ENCODE measurements at regions of chr1 and their contacts with region 1.

Region 1: DNA sequence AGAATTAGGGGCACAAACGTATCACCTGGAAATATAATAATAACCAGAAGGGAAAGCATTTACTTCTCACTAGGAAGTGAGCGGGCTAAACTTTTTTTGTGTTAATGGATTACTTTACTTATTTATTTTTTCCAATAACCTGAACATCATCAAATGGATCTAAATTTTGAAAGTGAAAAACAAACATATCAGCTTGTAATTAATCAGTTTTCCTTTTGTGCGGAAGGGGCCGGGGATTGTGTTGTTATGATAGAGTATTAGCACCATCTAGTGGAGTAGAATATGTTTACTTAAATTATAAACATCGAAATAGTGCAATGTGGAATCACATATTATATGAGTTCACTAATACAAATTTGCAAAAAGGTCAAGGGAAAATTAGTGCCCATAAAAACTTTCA is 9.0 kb downstream of the CFH start:
- DNase-seq: no peak
- ATAC-seq: peak; percentile 36

Region 2: GRCh38 chr1:196148367-196148970 is 512.4 kb before region 1 on chr1:
- intact Hi-C with region 1: loop called in 1 of 2 experiments (anchors 10 kb)
- DNase-seq: no peak
- ATAC-seq: no peak

Region 3: DNA sequence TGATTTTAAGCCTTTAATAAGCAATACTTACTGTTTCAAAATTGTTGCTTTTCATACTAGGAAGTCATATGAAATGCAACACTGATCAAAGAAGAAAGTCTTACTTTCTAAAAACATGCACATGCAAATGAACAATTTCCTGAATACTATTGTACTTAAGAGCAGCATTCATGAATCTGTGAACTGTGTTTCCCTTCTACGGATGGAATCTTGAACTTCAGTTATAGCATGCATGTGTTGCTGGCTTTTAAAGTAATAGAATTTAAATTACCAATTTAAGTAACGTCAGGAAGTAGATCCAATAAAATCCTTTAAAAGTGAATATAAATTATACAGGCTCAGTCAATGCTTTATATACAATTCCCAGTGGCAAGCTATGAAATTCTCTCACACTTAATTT is 401.5 kb before region 1 on chr1:
- intact Hi-C with region 1: no loop called
- DNase-seq: no peak
- ATAC-seq: no peak

Region 4: GRCh38 chr1:196355206-196355786 is 305.6 kb before region 1 on chr1:
- intact Hi-C with region 1: loop called in 1 of 2 experiments (anchors 10 kb)
- DNase-seq: no peak
- ATAC-seq: no peak